ENCODE measurements at regions of chr1 and their contacts with region 1.

Region 1: GRCh38 chr1:100816049-100816448 is 78.6 kb downstream of the EXTL2 start:
- DNase-seq: peak in 1 of 4 experiments; percentile 22
- ATAC-seq: no peak
- H3K4me3 ChIP-seq: no peak overlapping the region
- H3K27ac ChIP-seq: peak overlapping the region; percentile 37; the same call in 1 of the 3 replicates
- H3K4me1 ChIP-seq: peaks cover 0 to 3% of the 10 kb centered on the region in 2 experiments; a peak in 3 of 5 replicates
- H3K27me3 ChIP-seq: no peaks in the 10 kb centered on the region
- CTCF ChIP-seq: no peak
- EP300 ChIP-seq: peak; percentile 72
- POLR2A ChIP-seq: no peak
- RAD21 ChIP-seq: no peak

Region 2: GRCh38 chr1:100750005-100750885 is 65.8 kb before region 1 on chr1:
- CTCF ChIA-PET with region 1: no interaction called
- POLR2A ChIA-PET with region 1: no interaction called
- in situ Hi-C with region 1: no loop called
- intact Hi-C with region 1: loop called (anchors 5 kb)
- DNase-seq: peak in 2 of 4 experiments; percentile 17 to 25
- ATAC-seq: peak; percentile 87
- H3K4me3 ChIP-seq: no peak overlapping the region
- H3K27ac ChIP-seq: no peak overlapping the region
- H3K4me1 ChIP-seq: no peaks in the 10 kb centered on the region
- H3K27me3 ChIP-seq: no peaks in the 10 kb centered on the region
- CTCF ChIP-seq: peak; percentile 51 to 57 (median 57)
- EP300 ChIP-seq: no peak
- POLR2A ChIP-seq: no peak
- RAD21 ChIP-seq: peak; percentile 50 to 82; a peak in 3 of 4 replicates

Region 3: DNA sequence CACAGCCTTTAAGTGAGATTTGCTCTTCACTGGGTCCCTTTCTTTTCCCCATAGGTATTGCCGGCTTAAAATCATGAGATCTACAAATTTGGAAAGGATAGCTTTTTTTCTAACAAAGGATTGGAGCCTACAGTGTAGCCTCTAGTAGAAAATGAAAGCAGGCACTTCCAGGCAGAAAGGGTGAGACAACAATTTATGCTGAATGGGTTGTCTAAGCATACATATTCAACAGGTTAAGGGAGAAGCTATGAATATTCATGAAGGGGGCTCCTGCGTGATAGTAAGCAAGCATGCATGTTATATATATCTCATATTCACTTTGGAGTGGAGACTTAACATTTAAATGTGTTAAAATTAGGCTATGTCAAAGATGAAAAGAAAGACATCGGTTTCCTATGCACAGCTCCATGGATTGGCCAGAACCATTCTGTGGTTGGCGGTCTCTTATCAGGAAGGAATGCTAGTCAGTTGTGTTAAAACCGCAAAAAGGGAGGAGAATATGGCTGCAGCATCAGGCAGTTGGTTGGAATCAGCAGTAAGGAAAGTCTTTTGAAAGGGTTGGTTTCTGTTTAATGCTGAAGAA is 30.5 kb before region 1 on chr1:
- CTCF ChIA-PET with region 1: no interaction called
- POLR2A ChIA-PET with region 1: no interaction called
- in situ Hi-C with region 1: no loop called
- intact Hi-C with region 1: loop called (anchors 2 kb)
- DNase-seq: peak in 3 of 4 experiments; percentile 15 to 88 (median 60)
- ATAC-seq: peak; percentile 97
- H3K4me3 ChIP-seq: peak overlapping the region; percentile 26
- H3K27ac ChIP-seq: peak overlapping the region; percentile 93
- H3K4me1 ChIP-seq: peaks cover 0 to 16% of the 10 kb centered on the region in 2 experiments; a peak in 3 of 5 replicates
- H3K27me3 ChIP-seq: no peaks in the 10 kb centered on the region
- CTCF ChIP-seq: no peak
- EP300 ChIP-seq: peak; percentile 92
- POLR2A ChIP-seq: 0 out of 2 replicates have a peak, but pooled peaks have one; percentile 48
- RAD21 ChIP-seq: no peak; a peak in 2 of 4 replicates

Region 4: GRCh38 chr1:101101362-101101761 is 285.3 kb after region 1 on chr1:
- CTCF ChIA-PET with region 1: no interaction called
- POLR2A ChIA-PET with region 1: no interaction called
- in situ Hi-C with region 1: no loop called
- intact Hi-C with region 1: no loop called
- DNase-seq: no peak
- ATAC-seq: no peak
- H3K4me3 ChIP-seq: no peak overlapping the region
- H3K27ac ChIP-seq: no peak overlapping the region
- H3K4me1 ChIP-seq: peaks cover 0 to 6% of the 10 kb centered on the region in 2 experiments; a peak in 1 of 5 replicates
- H3K27me3 ChIP-seq: no peaks in the 10 kb centered on the region
- CTCF ChIP-seq: no peak
- EP300 ChIP-seq: no peak
- POLR2A ChIP-seq: no peak
- RAD21 ChIP-seq: no peak

Measured in K562 (cell line).